HEK293 (cell line): ENCODE measurements at regions of chr19 and their contacts with region 1.

Region 1: GRCh38 chr19:33311326-33311682 is 9.0 kb upstream of the CEBPA start:
- H3K4me3 ChIP-seq: no peak overlapping the region
- H3K27ac ChIP-seq: no peak overlapping the region
- H3K4me1 ChIP-seq: peaks cover 8% of the 10 kb centered on the region
- CTCF ChIP-seq: peak; percentile 66

Region 2: GRCh38 chr19:33339016-33339984 is 28.0 kb after region 1 on chr19:
- CTCF ChIA-PET with region 1: interaction called, 6 read pairs
- POLR2A ChIA-PET with region 1: interaction called, 17 read pairs
- H3K4me3 ChIP-seq: no peak overlapping the region
- H3K27ac ChIP-seq: no peak overlapping the region
- H3K4me1 ChIP-seq: peaks cover 3% of the 10 kb centered on the region; the same call in 1 of the 2 replicates
- CTCF ChIP-seq: no peak

Region 3: GRCh38 chr19:33348301-33349010 is 37.2 kb after region 1 on chr19:
- CTCF ChIA-PET with region 1: interaction called, 10 read pairs
- POLR2A ChIA-PET with region 1: no interaction called
- H3K4me3 ChIP-seq: no peak overlapping the region
- H3K27ac ChIP-seq: peak overlapping the region; percentile 40
- H3K4me1 ChIP-seq: peaks cover 21% of the 10 kb centered on the region
- CTCF ChIP-seq: no peak